Esophagus muscularis mucosa (tissue), 4 donors: ENCODE measurements at regions of chr18 and their contacts with region 1.

Region 1: DNA sequence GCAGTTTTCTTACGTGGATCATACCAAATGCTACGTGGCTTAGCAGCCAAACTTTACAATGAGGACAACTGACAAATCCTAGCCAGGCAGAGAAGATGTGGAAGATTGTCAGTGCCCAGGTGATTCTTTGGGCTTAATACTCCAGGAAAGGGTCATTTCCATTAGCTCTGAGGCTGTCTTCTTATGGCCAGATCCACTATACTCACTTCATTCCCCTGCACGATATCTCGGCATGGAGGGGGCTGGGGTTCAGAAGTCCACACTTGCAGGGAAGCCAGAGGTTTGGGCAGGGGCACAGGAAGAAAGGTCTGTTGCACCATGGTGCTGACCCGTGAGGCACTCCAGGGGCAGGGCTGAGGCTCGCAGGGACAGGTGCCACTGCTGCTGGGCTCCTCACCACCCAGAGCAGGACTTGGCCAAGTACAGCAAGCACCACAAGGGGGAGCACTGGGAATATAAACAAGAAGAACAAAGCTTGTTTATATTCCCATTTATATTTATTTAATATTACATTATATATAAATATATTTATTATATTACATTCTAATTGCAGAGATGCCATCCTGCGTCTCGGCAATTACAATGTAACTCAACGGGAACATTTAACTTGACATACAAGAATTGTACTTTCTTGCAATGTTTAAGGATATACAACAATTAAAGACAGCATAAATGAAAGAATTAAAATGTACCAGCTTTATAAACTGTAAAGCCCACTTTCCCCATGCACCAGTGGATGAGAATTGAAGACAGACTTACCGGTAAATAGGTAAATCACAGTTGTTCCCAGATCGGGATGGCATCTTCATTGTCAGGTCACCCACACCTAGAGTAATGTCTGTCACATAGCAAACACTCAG is 27.2 kb downstream of the CLUL1 start:
- DNase-seq: no peak
- H3K4me3 ChIP-seq: no peak overlapping the region
- H3K27ac ChIP-seq: no peak overlapping the region
- H3K4me1 ChIP-seq: peaks cover 0 to 21% (median 10%) of the 10 kb centered on the region in 4 donors
- H3K27me3 ChIP-seq: no peaks in the 10 kb centered on the region
- CTCF ChIP-seq: peak; percentile 58 to 86 (median 69)
- EP300 ChIP-seq: no peak
- POLR2A ChIP-seq: no peak

Region 2: GRCh38 chr18:286515-287310 is 337.3 kb before region 1 on chr18:
- intact Hi-C with region 1: loop called (anchors 2 kb)
- DNase-seq: no peak
- H3K4me3 ChIP-seq: no peak overlapping the region
- H3K27ac ChIP-seq: no peak overlapping the region
- H3K4me1 ChIP-seq: no peaks in the 10 kb centered on the region
- H3K27me3 ChIP-seq: no peaks in the 10 kb centered on the region
- CTCF ChIP-seq: peak; percentile 57 to 61 (median 57)
- EP300 ChIP-seq: no peak
- POLR2A ChIP-seq: no peak

Region 3: GRCh38 chr18:519019-519879 is 104.7 kb before region 1 on chr18:
- intact Hi-C with region 1: no loop called
- DNase-seq: no peak
- H3K4me3 ChIP-seq: no peak overlapping the region
- H3K27ac ChIP-seq: peak overlapping the region; percentile 51 to 72 (median 60)
- H3K4me1 ChIP-seq: peaks cover 8 to 24% (median 16%) of the 10 kb centered on the region in 4 donors
- H3K27me3 ChIP-seq: no peaks in the 10 kb centered on the region
- CTCF ChIP-seq: no peak
- EP300 ChIP-seq: no peak
- POLR2A ChIP-seq: no peak

Region 4: DNA sequence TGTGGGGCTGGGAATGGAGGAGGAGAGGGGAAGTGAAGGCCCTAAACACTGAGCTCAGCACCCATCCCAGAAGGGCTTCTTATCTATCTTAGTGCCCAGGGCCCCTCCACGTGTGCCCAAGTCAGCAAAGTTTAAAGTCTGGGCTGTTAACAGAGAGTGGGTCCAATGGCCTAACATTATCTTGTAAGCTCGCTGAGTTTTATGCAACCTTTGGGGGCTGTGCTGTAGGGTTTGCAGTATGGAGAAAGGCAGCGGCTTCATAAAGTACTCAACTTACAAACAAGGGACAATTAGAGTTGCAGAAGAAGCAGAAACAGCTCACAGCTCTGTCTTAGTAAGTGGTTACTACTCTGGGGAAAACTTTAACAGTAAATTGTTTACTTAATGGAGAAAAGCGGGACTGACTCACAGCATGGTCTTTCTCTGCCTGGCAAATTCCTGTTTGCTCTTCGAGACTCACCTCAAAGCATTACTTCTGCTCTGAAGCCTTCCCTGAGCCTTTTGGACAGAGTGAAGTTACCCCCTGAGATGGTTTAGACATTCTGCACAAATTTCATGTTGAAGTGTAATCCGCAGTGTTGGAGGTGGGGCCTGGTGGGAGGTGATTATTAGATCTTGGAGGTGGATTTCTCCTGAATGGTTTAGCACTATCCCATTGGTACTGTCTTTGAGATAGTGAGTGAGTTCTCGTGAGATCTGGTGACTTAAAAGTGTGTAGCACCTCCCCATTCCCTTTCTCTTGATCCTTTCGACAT is 79.4 kb after region 1 on chr18:
- intact Hi-C with region 1: loop called (anchors 10 kb)
- DNase-seq: no peak
- H3K4me3 ChIP-seq: no peak overlapping the region
- H3K27ac ChIP-seq: peak overlapping the region; percentile 66 to 85 (median 78)
- H3K4me1 ChIP-seq: peaks cover 0 to 53% (median 28%) of the 10 kb centered on the region in 4 donors
- H3K27me3 ChIP-seq: no peaks in the 10 kb centered on the region
- CTCF ChIP-seq: no peak
- EP300 ChIP-seq: no peak
- POLR2A ChIP-seq: no peak

Region 5: GRCh38 chr18:830315-830901 is 206.4 kb after region 1 on chr18:
- intact Hi-C with region 1: loop called (anchors 2 kb)
- DNase-seq: no peak
- H3K4me3 ChIP-seq: no peak overlapping the region
- H3K27ac ChIP-seq: peak overlapping the region in 2 of 4 donors; percentile 7 to 14
- H3K4me1 ChIP-seq: peaks cover 4 to 14% (median 4%) of the 10 kb centered on the region in 4 donors
- H3K27me3 ChIP-seq: peaks cover 0 to 13% (median 0%) of the 10 kb centered on the region in 4 donors
- CTCF ChIP-seq: no peak
- EP300 ChIP-seq: no peak
- POLR2A ChIP-seq: no peak

Region 6: GRCh38 chr18:839224-840022 is 215.4 kb after region 1 on chr18:
- intact Hi-C with region 1: loop called (anchors 2 kb)
- DNase-seq: peak; percentile 97
- H3K4me3 ChIP-seq: no peak overlapping the region
- H3K27ac ChIP-seq: no peak overlapping the region
- H3K4me1 ChIP-seq: peaks cover 3 to 13% (median 9%) of the 10 kb centered on the region in 4 donors
- H3K27me3 ChIP-seq: no peaks in the 10 kb centered on the region
- CTCF ChIP-seq: peak in 2 of 3 experiments; percentile 90 to 93
- EP300 ChIP-seq: no peak
- POLR2A ChIP-seq: no peak